Naive thymus-derived CD4-positive, alpha-beta T cell (primary cell): ENCODE measurements at regions of chr20 and their contacts with region 1.

Region 1: GRCh38 chr20:48760403-48760983 is 67.3 kb downstream of the PREX1 start:
- DNase-seq: peak in 8 of 9 donors; percentile 21 to 74 (median 62)
- ATAC-seq: peak; percentile 85
- H3K4me3 ChIP-seq: peak overlapping the region; percentile 48
- H3K4me3 Mint-ChIP-seq: peak overlapping the region in 9 of 10 donors; percentile 54 to 81 (median 70)
- H3K27ac ChIP-seq: peak overlapping the region; percentile 57
- H3K27ac Mint-ChIP-seq: peak overlapping the region; percentile 85 to 95 (median 93)
- H3K4me1 ChIP-seq: peaks cover 45 to 72% of the 10 kb centered on the region in 2 donors
- H3K4me1 Mint-ChIP-seq: peaks cover 38 to 86% (median 58%) of the 10 kb centered on the region in 7 donors
- H3K27me3 ChIP-seq: no peaks in the 10 kb centered on the region
- H3K27me3 Mint-ChIP-seq: no peaks in the 10 kb centered on the region

Region 2: GRCh38 chr20:48387675-48388285 is 372.7 kb before region 1 on chr20:
- CTCF ChIA-PET with region 1: no interaction called
- POLR2A ChIA-PET with region 1: no interaction called
- intact Hi-C with region 1: no loop called
- DNase-seq: no peak
- ATAC-seq: no peak
- H3K4me3 ChIP-seq: no peak overlapping the region
- H3K4me3 Mint-ChIP-seq: no peak overlapping the region
- H3K27ac ChIP-seq: no peak overlapping the region
- H3K27ac Mint-ChIP-seq: no peak overlapping the region
- H3K4me1 ChIP-seq: no peaks in the 10 kb centered on the region
- H3K4me1 Mint-ChIP-seq: peaks cover 0 to 2% (median 0%) of the 10 kb centered on the region in 7 donors
- H3K27me3 ChIP-seq: no peaks in the 10 kb centered on the region
- H3K27me3 Mint-ChIP-seq: peaks cover 0 to 23% (median 3%) of the 10 kb centered on the region in 5 donors

Region 3: GRCh38 chr20:48718857-48719578 is 41.5 kb before region 1 on chr20:
- CTCF ChIA-PET with region 1: no interaction called
- POLR2A ChIA-PET with region 1: no interaction called
- intact Hi-C with region 1: loop called in 1 of 2 experiments (anchors 5 kb)
- DNase-seq: peak in 2 of 9 donors; percentile 3 to 31
- ATAC-seq: peak; percentile 42
- H3K4me3 ChIP-seq: peak overlapping the region; percentile 3
- H3K4me3 Mint-ChIP-seq: peak overlapping the region in 5 of 10 donors; percentile 10 to 86 (median 32)
- H3K27ac ChIP-seq: no peak overlapping the region
- H3K27ac Mint-ChIP-seq: peak overlapping the region in 5 of 9 donors; percentile 37 to 84 (median 78)
- H3K4me1 ChIP-seq: peaks cover 47 to 86% of the 10 kb centered on the region in 2 donors
- H3K4me1 Mint-ChIP-seq: peaks cover 45 to 89% (median 65%) of the 10 kb centered on the region in 7 donors
- H3K27me3 ChIP-seq: no peaks in the 10 kb centered on the region
- H3K27me3 Mint-ChIP-seq: no peaks in the 10 kb centered on the region

Region 4: DNA sequence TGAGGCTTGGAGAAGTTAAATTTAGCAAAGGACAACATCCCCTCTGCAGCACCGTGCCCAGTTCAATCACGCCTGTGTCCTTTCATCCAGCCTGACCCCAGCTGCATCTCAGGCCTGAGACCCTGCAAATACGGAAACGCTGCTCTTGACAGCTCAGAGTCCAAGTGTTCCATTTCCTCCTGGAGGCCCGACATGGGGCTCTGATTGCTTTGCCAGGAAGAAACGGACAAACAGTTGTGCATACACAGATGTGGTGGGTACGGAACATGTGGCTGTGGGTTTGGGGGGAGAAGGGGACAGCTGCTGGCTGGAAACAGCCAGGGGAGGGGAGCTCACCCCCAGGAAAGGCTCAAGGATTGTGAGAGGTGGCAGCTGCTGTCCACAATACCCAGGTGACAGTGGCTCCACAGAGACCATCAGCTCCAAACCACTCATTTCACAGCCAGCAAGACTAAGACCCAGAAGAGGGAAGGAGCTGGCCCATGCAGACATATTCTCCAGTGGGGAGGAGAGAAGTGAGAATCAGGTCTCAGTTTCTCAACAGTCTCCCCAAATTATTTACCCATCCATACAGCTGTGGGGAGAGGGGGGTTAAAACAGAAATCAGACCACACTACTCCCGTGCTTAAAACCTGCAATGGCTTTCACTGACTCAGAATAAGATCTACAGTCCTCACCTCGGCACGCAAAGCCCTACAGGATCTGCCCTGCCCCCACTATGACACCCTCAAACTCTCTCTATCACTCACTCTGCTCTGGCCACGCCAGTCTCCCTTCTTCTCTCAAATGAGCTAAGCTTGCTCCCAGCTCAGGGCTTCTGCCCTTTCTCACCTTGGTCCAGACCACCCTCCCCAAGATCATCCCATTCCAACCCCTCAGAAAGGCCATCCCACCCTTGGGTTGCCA is 21.8 kb before region 1 on chr20:
- CTCF ChIA-PET with region 1: no interaction called
- POLR2A ChIA-PET with region 1: no interaction called
- intact Hi-C with region 1: loop called in 1 of 2 experiments (anchors 2 kb)
- DNase-seq: peak in 1 of 9 donors; percentile 65
- ATAC-seq: peak; percentile 54
- H3K4me3 ChIP-seq: no peak overlapping the region
- H3K4me3 Mint-ChIP-seq: peak overlapping the region in 2 of 10 donors; percentile 37 to 76
- H3K27ac ChIP-seq: no peak overlapping the region
- H3K27ac Mint-ChIP-seq: peak overlapping the region in 5 of 9 donors; percentile 11 to 90 (median 53)
- H3K4me1 ChIP-seq: peaks cover 0 to 47% of the 10 kb centered on the region in 2 donors
- H3K4me1 Mint-ChIP-seq: peaks cover 7 to 65% (median 24%) of the 10 kb centered on the region in 7 donors
- H3K27me3 ChIP-seq: no peaks in the 10 kb centered on the region
- H3K27me3 Mint-ChIP-seq: no peaks in the 10 kb centered on the region

Region 5: GRCh38 chr20:48783533-48784272 is 23.2 kb after region 1 on chr20:
- CTCF ChIA-PET with region 1: no interaction called
- POLR2A ChIA-PET with region 1: no interaction called
- intact Hi-C with region 1: loop called in 1 of 2 experiments (anchors 1 kb)
- DNase-seq: peak in 1 of 9 donors; percentile 47
- ATAC-seq: peak; percentile 55
- H3K4me3 ChIP-seq: no peak overlapping the region
- H3K4me3 Mint-ChIP-seq: no peak overlapping the region
- H3K27ac ChIP-seq: no peak overlapping the region
- H3K27ac Mint-ChIP-seq: no peak overlapping the region
- H3K4me1 ChIP-seq: peaks cover 19 to 59% of the 10 kb centered on the region in 2 donors
- H3K4me1 Mint-ChIP-seq: peaks cover 16 to 54% (median 25%) of the 10 kb centered on the region in 7 donors
- H3K27me3 ChIP-seq: no peaks in the 10 kb centered on the region
- H3K27me3 Mint-ChIP-seq: no peaks in the 10 kb centered on the region